Activated CD4-positive, alpha-beta T cell treated with anti-CD3 and anti-CD28 coated beads, Interleukin-2, amount 10 ng/mL, durations not matched to agents 24 days and 14 days (primary cell): ENCODE measurements at regions of chr15 and their contacts with region 1.

Region 1: DNA sequence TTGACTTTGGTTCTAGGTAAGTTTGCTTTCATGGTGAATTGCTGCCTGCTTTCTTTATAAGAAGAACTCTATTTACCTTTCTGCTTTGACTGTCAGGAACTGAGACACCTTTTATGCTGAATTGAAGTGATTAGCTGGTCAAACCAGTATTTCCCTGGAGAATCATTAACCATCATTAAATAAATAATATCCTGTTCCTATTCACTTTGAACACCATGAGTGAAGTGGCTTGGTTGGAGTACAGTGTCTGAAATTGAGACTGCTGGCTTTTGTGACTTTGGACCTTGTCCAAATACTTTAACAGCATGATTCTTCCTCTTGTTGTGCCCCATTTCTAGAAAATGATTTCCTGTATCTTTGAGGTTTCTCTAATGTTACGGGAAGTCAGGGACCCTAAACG is 5.6 kb upstream of the TMEM62 start:
- DNase-seq: no peak
- H3K4me3 Mint-ChIP-seq: no peak overlapping the region
- H3K27ac Mint-ChIP-seq: no peak overlapping the region
- H3K4me1 Mint-ChIP-seq: peaks cover 17% of the 10 kb centered on the region
- H3K27me3 Mint-ChIP-seq: peaks cover 19% of the 10 kb centered on the region

Region 2: DNA sequence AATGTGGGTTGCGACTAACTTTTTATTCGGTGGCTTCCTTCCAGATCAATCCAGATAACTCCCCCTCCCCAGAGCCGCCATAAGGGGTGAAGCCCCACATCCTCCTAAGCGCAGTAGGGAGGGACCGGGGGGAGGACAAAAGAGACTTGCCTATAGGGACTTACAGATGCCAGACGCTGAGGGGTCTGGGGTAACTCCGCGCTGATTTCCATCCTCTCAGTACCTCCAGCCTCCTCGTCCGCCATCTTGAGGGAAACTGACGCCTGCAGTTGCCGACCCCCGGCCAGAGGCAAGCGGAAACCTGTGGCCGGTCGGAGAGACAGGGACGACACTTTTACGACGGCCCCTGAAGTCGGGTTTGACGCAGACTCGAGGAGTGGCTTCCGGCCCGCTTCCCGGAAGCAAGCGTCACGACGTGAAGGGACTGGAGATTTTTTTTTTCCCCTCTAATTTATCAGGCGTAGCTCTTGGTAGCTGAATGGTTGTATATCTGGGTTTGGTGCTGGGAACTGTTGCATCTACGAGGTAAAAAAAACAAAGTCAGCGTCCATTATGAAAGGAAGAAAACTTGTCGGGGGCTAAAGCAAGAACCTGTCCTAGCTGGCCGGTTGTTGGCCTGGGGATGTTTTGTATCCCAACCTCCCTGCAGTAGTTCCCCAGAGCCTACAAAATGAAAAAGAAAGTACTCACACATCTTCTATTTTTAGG is 21.8 kb before region 1 on chr15 and contains the start of gene UBR1:
- intact Hi-C with region 1: loop called (anchors 1 kb)
- DNase-seq: peak; percentile 97
- H3K4me3 Mint-ChIP-seq: peak within 1 kb of the TSS; percentile 99
- H3K27ac Mint-ChIP-seq: peak within 1 kb of the TSS; percentile 94
- H3K4me1 Mint-ChIP-seq: peaks cover 42% of the 10 kb centered on the region
- H3K27me3 Mint-ChIP-seq: no peaks in the 10 kb centered on the region
- total RNA-seq, gene UBR1: 31.6 and 34.3 TPM in 2 replicates

Region 3: GRCh38 chr15:43241100-43241499 is 113.3 kb after region 1 on chr15:
- intact Hi-C with region 1: no loop called
- DNase-seq: no peak
- H3K4me3 Mint-ChIP-seq: no peak overlapping the region
- H3K27ac Mint-ChIP-seq: no peak overlapping the region
- H3K4me1 Mint-ChIP-seq: peaks cover 16% of the 10 kb centered on the region
- H3K27me3 Mint-ChIP-seq: no peaks in the 10 kb centered on the region

Region 4: GRCh38 chr15:43550527-43551363 is 423.0 kb after region 1 on chr15:
- intact Hi-C with region 1: no loop called
- DNase-seq: no peak
- H3K4me3 Mint-ChIP-seq: no peak overlapping the region
- H3K27ac Mint-ChIP-seq: no peak overlapping the region
- H3K4me1 Mint-ChIP-seq: no peaks in the 10 kb centered on the region
- H3K27me3 Mint-ChIP-seq: no peaks in the 10 kb centered on the region